CD4-positive, alpha-beta memory T cell (primary cell): ENCODE measurements at regions of chr9 and their contacts with region 1.

Region 1: GRCh38 chr9:38088006-38088925 is 19.2 kb upstream of the SHB start:
- DNase-seq: peak; percentile 49 to 64 (median 53)
- H3K4me3 ChIP-seq: no peak overlapping the region
- H3K4me3 Mint-ChIP-seq: no peak overlapping the region
- H3K27ac ChIP-seq: no peak overlapping the region
- H3K27ac Mint-ChIP-seq: no peak overlapping the region
- H3K4me1 ChIP-seq: no peaks in the 10 kb centered on the region
- H3K4me1 Mint-ChIP-seq: peaks cover 0 to 3% (median 2%) of the 10 kb centered on the region in 4 donors
- H3K27me3 ChIP-seq: no peaks in the 10 kb centered on the region
- H3K27me3 Mint-ChIP-seq: peaks cover 8 to 13% of the 10 kb centered on the region in 2 donors

Region 2: DNA sequence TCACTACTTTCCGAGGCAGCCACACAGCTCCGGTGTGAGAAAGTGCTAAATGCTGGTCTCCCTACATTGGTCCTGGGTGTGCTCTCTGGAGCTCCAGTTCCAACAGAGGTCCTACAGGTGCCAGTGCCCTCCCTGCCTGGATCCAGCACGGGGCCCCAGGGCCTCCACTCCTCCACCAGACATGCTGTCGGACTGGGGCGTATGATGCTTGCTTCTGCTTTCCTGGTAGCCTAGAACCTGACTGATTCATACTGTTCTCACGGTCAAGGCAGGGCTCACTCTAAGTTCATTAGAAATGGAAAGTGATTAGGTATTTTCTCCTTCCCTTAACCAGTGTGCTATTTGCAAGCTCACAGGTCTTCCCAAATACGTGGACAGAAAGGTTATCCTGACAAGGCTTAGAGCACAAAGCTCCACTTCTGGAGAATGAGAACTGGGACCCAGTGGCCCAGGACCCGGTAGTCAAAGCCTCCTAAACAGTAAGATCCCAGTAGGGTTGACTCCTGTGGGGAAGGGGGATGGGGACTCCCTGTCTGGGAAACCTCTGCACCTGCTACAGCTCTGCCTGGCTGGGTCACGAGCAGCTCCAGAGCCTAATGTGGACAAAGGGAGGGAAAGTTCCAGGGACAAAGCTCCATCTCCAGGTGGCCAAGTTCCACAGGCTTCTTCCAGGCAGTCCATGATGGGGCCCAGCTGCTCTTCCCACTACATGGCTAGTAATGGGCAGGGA is 1152.3 kb before region 1 on chr9:
- CTCF ChIA-PET with region 1: no interaction called
- POLR2A ChIA-PET with region 1: no interaction called
- intact Hi-C with region 1: no loop called
- DNase-seq: no peak
- H3K4me3 ChIP-seq: no peak overlapping the region
- H3K4me3 Mint-ChIP-seq: no peak overlapping the region
- H3K27ac ChIP-seq: no peak overlapping the region
- H3K27ac Mint-ChIP-seq: peak overlapping the region in 1 of 7 donors; percentile 7
- H3K4me1 ChIP-seq: no peaks in the 10 kb centered on the region
- H3K4me1 Mint-ChIP-seq: no peaks in the 10 kb centered on the region
- H3K27me3 ChIP-seq: no peaks in the 10 kb centered on the region
- H3K27me3 Mint-ChIP-seq: peaks cover 5 to 9% of the 10 kb centered on the region in 2 donors

Region 3: DNA sequence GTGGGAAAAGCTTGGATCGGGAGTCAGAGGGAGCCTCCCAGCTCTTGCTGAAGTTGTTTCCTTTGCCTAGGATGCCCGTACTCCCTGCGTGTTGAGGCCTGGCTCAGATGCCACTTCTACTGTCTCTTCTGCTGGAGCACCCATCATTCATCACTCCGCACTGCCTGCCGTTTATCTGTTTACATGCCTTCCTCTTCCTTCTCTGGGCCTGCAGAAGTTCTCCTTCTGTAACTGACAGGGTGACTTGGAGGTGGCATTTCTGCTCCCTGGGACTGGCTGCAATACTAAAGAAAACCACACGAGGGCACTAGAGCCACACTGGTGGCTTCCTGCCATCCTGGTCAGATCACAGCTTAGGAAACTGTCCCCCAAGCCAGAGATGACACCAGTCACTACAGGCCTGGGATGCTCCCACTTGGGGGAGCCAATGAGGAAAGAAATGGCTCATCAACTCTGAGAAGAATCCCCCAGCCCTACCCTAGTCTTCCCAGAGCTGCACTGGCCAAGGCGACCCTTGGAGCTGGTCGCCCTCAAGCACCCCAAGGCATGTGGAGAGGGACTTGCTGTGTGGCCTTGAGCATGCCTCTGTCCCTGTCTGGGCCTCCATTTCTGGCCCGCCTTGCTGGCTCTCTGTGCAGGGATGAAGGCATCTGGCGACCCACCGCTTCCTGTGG is 174.6 kb before region 1 on chr9:
- CTCF ChIA-PET with region 1: interaction called, 56 read pairs
- POLR2A ChIA-PET with region 1: no interaction called
- intact Hi-C with region 1: loop called (anchors 1 kb)
- DNase-seq: peak; percentile 68 to 77 (median 70)
- H3K4me3 ChIP-seq: no peak overlapping the region
- H3K4me3 Mint-ChIP-seq: no peak overlapping the region
- H3K27ac ChIP-seq: no peak overlapping the region
- H3K27ac Mint-ChIP-seq: peak overlapping the region in 1 of 7 donors; percentile 2
- H3K4me1 ChIP-seq: no peaks in the 10 kb centered on the region
- H3K4me1 Mint-ChIP-seq: peaks cover 0 to 4% (median 0%) of the 10 kb centered on the region in 4 donors
- H3K27me3 ChIP-seq: no peaks in the 10 kb centered on the region
- H3K27me3 Mint-ChIP-seq: no peaks in the 10 kb centered on the region

Region 4: GRCh38 chr9:38068866-38069629 is 19.2 kb before region 1 on chr9 and contains the start of gene SHB:
- CTCF ChIA-PET with region 1: interaction called, 15 read pairs
- POLR2A ChIA-PET with region 1: no interaction called
- intact Hi-C with region 1: no loop called
- DNase-seq: peak; percentile 75 to 79 (median 77)
- H3K4me3 ChIP-seq: peak within 1 kb of the TSS; percentile 65 to 76
- H3K4me3 Mint-ChIP-seq: peak within 1 kb of the TSS; percentile 81 to 91 (median 88)
- H3K27ac ChIP-seq: peak within 1 kb of the TSS; percentile 61
- H3K27ac Mint-ChIP-seq: peak within 1 kb of the TSS; percentile 63 to 91 (median 82)
- H3K4me1 ChIP-seq: peaks cover 25% of the 10 kb centered on the region
- H3K4me1 Mint-ChIP-seq: peaks cover 14 to 52% (median 28%) of the 10 kb centered on the region in 4 donors
- H3K27me3 ChIP-seq: peaks cover 6% of the 10 kb centered on the region
- H3K27me3 Mint-ChIP-seq: no peaks in the 10 kb centered on the region
- total RNA-seq, gene SHB: 0.81 to 1.3 TPM

Region 5: DNA sequence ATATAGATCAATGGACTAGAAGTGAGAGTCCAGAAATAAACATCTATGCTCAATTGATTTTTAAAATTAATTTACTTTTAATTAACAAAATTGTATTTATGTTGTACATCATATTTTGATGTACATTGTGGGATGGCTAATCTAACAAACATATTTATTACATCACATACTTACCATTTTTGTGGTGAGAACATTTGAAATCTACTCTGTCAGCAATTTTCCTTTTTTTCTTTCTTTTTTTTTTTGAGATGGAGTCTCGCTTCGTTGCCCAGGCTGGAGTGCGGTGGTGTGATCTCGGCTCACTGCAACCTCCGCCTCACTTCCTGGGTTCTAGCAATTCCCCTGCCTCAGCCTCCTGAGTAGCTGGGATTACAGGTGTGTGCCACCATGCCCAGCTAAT is 13.2 kb after region 1 on chr9:
- CTCF ChIA-PET with region 1: interaction called, 19 read pairs
- POLR2A ChIA-PET with region 1: no interaction called
- intact Hi-C with region 1: no loop called
- DNase-seq: no peak
- H3K4me3 ChIP-seq: no peak overlapping the region
- H3K4me3 Mint-ChIP-seq: no peak overlapping the region
- H3K27ac ChIP-seq: no peak overlapping the region
- H3K27ac Mint-ChIP-seq: no peak overlapping the region
- H3K4me1 ChIP-seq: no peaks in the 10 kb centered on the region
- H3K4me1 Mint-ChIP-seq: no peaks in the 10 kb centered on the region
- H3K27me3 ChIP-seq: peaks cover 4% of the 10 kb centered on the region
- H3K27me3 Mint-ChIP-seq: peaks cover 15 to 22% of the 10 kb centered on the region in 2 donors

Region 6: DNA sequence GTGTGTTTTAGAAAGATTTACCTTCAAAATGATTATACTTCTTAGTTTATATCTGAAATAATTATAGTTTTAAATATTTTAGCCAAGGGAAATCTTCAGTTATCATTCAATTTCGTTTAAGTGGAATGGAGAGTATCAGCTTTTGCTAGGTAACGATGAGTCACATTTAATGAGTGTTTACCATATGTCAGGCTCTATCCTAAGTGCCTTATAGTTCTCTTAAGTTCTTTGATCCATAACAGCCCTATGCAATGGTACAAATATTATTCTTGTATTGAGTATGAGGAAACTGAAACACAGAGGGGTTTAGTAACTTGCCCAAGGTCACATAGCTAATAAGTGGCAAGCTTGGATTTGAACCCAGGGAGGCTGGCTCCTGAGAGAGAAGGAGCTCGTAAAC is 18.2 kb after region 1 on chr9:
- CTCF ChIA-PET with region 1: interaction called, 19 read pairs
- POLR2A ChIA-PET with region 1: no interaction called
- intact Hi-C with region 1: no loop called
- DNase-seq: no peak
- H3K4me3 ChIP-seq: no peak overlapping the region
- H3K4me3 Mint-ChIP-seq: no peak overlapping the region
- H3K27ac ChIP-seq: no peak overlapping the region
- H3K27ac Mint-ChIP-seq: no peak overlapping the region
- H3K4me1 ChIP-seq: no peaks in the 10 kb centered on the region
- H3K4me1 Mint-ChIP-seq: no peaks in the 10 kb centered on the region
- H3K27me3 ChIP-seq: no peaks in the 10 kb centered on the region
- H3K27me3 Mint-ChIP-seq: peaks cover 14 to 20% of the 10 kb centered on the region in 2 donors

Region 7: DNA sequence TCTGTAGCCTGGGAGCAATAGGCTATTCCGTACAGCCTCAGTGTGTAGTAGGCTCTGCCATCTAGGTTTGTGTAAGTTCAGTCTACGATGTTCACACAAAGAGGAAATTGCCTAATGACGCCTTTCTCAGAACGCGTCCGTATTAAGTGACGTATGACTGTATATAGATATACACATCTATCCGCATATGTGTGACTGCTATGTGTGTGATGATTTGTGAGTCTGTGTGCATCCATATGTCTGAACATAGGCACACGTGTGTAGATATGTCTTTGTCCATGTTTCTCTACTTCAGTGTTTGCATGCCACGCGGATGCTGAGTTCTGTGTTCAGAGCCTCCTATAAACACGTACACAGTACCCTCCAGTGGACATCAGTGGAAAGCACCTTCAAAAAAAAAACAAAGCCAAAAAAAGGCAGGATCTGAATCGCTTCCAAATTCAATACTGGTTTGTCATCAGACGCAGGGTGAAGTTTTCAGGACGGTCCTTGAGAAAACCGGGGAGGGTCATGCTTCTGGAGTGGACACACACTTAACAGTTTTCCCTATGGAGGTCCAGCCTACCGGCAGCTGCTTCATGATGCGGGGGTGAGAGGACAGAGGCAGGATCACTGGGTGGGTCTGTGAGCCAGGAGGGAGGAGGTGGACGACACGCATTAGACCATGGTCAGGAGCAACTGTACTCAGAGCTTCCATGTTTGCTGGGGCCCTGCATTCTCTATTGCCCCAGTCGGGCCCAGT is 274.8 kb after region 1 on chr9:
- CTCF ChIA-PET with region 1: interaction called, 4 read pairs
- POLR2A ChIA-PET with region 1: no interaction called
- intact Hi-C with region 1: loop called (anchors 2 kb)
- DNase-seq: peak in 4 of 5 donors; percentile 15 to 30 (median 24)
- H3K4me3 ChIP-seq: no peak overlapping the region
- H3K4me3 Mint-ChIP-seq: peak overlapping the region in 7 of 8 donors; percentile 41 to 73 (median 66)
- H3K27ac ChIP-seq: no peak overlapping the region
- H3K27ac Mint-ChIP-seq: peak overlapping the region in 4 of 7 donors; percentile 10 to 53 (median 48)
- H3K4me1 ChIP-seq: no peaks in the 10 kb centered on the region
- H3K4me1 Mint-ChIP-seq: peaks cover 2 to 6% (median 4%) of the 10 kb centered on the region in 4 donors
- H3K27me3 ChIP-seq: no peaks in the 10 kb centered on the region
- H3K27me3 Mint-ChIP-seq: peaks cover 1 to 4% of the 10 kb centered on the region in 2 donors

Region 8: GRCh38 chr9:38401994-38402393 is 313.7 kb after region 1 on chr9:
- CTCF ChIA-PET with region 1: interaction called, 8 read pairs
- POLR2A ChIA-PET with region 1: no interaction called
- intact Hi-C with region 1: loop called (anchors 2 kb)
- DNase-seq: no peak
- H3K4me3 ChIP-seq: no peak overlapping the region
- H3K4me3 Mint-ChIP-seq: no peak overlapping the region
- H3K27ac ChIP-seq: no peak overlapping the region
- H3K27ac Mint-ChIP-seq: peak overlapping the region in 1 of 7 donors; percentile 0
- H3K4me1 ChIP-seq: no peaks in the 10 kb centered on the region
- H3K4me1 Mint-ChIP-seq: peaks cover 0 to 2% (median 0%) of the 10 kb centered on the region in 4 donors
- H3K27me3 ChIP-seq: no peaks in the 10 kb centered on the region
- H3K27me3 Mint-ChIP-seq: peaks cover 10 to 16% of the 10 kb centered on the region in 2 donors